Activated CD4-positive, alpha-beta T cell treated with anti-CD3 and anti-CD28 coated beads for 36 hours (primary cell): ENCODE measurements at regions of chr11 and their contacts with region 1.

Region 1: DNA sequence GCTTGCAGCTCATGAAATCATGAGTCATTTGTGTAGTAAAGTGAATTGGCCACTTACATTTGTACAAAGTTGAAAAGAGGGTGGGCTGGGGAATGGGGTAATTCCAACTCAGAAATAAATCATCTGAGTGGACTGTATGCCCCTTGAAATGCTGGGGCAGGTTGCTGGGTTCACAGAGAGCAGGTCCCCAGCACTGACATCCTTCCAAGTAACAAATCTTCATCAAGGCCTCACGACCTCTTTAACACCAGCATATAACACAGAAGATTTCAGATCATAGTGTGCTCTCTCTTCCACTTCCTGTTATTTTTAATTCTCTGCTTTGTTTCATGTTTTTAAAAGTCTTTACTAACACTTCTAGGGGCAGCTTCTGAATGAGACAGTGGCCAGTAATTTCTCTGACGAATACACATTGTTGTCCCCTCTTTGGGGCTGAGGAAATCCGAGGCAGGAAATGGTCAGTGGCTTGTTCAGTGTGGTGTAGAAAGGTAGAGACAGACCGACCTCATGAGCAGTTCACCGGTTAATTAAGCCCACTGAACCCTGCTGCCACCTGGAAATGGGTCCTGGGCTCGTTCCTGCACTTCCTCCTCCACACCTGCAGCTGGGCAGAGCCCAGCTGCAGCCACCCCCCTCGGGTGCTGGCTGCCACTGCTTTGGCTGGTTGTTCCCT is 127.7 kb downstream of the MAML2 start:
- DNase-seq: peak; percentile 43
- ATAC-seq: peak; percentile 39
- H3K4me3 Mint-ChIP-seq: peak overlapping the region; percentile 53
- H3K27ac Mint-ChIP-seq: peak overlapping the region; percentile 98
- H3K4me1 Mint-ChIP-seq: peaks cover 87% of the 10 kb centered on the region
- H3K27me3 Mint-ChIP-seq: no peaks in the 10 kb centered on the region

Region 2: GRCh38 chr11:96228473-96228891 is 13.2 kb after region 1 on chr11:
- CTCF ChIA-PET with region 1: interaction called, 8 read pairs
- POLR2A ChIA-PET with region 1: interaction called, 3 read pairs
- intact Hi-C with region 1: loop called in 1 of 2 experiments (anchors 2 kb)
- DNase-seq: no peak
- ATAC-seq: no peak
- H3K4me3 Mint-ChIP-seq: no peak overlapping the region
- H3K27ac Mint-ChIP-seq: peak overlapping the region; percentile 88
- H3K4me1 Mint-ChIP-seq: peaks cover 88% of the 10 kb centered on the region
- H3K27me3 Mint-ChIP-seq: no peaks in the 10 kb centered on the region

Region 3: GRCh38 chr11:96254087-96254486 is 38.8 kb after region 1 on chr11:
- CTCF ChIA-PET with region 1: no interaction called
- POLR2A ChIA-PET with region 1: no interaction called
- intact Hi-C with region 1: no loop called
- DNase-seq: peak; percentile 42
- ATAC-seq: peak; percentile 37
- H3K4me3 Mint-ChIP-seq: peak overlapping the region; percentile 53
- H3K27ac Mint-ChIP-seq: peak overlapping the region; percentile 88
- H3K4me1 Mint-ChIP-seq: peaks cover 89% of the 10 kb centered on the region
- H3K27me3 Mint-ChIP-seq: no peaks in the 10 kb centered on the region